HEK293T (cell line): ENCODE measurements at regions of chr21 and their contacts with region 1.

Region 1: GRCh38 chr21:36113647-36114428 is 21.0 kb upstream of the CBR3 start:
- DNase-seq: no peak

Region 2: DNA sequence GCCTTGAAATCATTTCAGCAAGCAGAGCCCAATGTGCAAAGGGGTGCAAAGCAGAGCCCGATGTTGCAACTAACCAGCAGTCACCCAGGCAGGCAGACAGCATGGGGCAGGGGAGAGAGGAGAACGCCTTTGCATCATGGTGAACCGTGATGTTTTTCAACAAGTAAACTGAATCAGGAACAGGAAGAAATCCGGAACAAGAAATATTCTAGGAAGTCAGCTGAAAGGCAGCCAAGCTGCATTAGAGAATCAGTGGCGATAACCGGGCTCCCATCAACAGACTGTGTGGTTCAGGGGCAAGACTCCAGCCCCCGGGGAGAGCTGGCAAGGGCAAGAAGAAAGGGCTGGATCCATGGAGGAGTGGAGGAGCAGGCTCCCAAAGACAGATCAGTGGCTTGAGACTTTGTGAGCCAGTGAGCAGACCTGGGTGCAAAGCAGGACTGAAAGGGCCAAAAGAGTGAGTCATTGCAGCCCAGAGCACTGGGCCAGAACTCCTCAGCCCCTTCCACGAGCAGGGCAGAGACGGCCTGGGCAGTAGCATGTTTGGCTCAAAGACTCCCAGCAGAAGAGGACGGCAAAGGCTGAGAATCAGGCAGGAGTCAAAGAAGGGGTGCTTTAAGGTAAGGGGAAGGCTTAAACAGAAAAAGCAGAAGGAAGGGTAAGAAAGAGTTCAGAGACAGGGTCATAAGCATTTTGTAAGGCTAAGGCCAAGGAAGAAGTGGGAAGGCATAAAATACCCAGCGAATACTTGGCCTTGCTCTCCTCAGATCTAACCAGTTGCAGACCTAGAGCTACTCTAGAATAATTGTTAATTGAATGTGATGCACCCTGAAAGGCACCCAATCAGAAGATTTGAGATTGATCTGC is 208.5 kb before region 1 on chr21:
- CTCF ChIA-PET with region 1: no interaction called
- POLR2A ChIA-PET with region 1: no interaction called
- DNase-seq: no peak

Region 3: GRCh38 chr21:36060159-36060921 is 53.5 kb before region 1 on chr21 and contains the start of gene SETD4:
- CTCF ChIA-PET with region 1: interaction called, 3 read pairs
- POLR2A ChIA-PET with region 1: interaction called, 16 read pairs
- DNase-seq: peak; percentile 98

Region 4: DNA sequence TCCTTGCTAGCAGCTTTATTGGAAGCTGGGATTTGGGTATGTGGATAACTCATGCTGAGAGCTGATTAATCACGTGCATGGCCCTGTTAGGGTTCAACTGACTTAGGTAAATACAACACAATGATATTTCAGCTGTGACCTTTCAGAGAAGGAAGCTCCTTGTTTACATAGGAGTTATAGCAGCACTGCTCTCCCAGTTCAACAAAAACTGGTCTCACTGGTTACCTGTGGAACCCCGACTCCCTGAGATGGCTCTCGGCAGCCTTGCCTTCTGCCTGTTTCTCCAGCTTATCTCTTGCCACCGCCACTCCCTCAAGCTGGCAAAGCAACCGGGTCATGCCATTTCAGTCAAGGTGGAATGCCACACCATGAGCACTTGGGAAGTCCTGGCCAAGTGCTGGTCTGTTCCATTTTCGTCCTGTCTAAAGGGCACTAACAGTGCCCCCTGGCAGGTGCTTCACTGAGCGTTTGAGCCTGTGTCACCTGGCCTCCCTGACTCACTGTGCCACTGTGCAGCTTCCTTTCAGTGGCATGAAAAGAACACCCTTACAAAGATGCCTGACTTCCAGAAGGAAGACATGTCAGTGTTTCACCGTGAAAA is 74.3 kb after region 1 on chr21:
- CTCF ChIA-PET with region 1: no interaction called
- POLR2A ChIA-PET with region 1: no interaction called
- DNase-seq: no peak